ENCODE measurements at regions of chr12 and their contacts with region 1.

Region 1: GRCh38 chr12:54368709-54369583 is 4.7 kb upstream of the GPR84 start:
- DNase-seq: peak; percentile 67 to 87 (median 83)
- ATAC-seq: peak; percentile 89
- H3K4me3 ChIP-seq: peak overlapping the region; percentile 46
- H3K4me3 Mint-ChIP-seq: peak overlapping the region; percentile 26 to 79 (median 68)
- H3K27ac ChIP-seq: no peak overlapping the region
- H3K27ac Mint-ChIP-seq: peak overlapping the region in 7 of 9 donors; percentile 20 to 87 (median 54)
- H3K4me1 ChIP-seq: peaks cover 12 to 24% of the 10 kb centered on the region in 2 donors
- H3K4me1 Mint-ChIP-seq: peaks cover 21 to 49% (median 38%) of the 10 kb centered on the region in 7 donors
- H3K27me3 ChIP-seq: no peaks in the 10 kb centered on the region
- H3K27me3 Mint-ChIP-seq: peaks cover 0 to 9% (median 0%) of the 10 kb centered on the region in 5 donors

Region 2: DNA sequence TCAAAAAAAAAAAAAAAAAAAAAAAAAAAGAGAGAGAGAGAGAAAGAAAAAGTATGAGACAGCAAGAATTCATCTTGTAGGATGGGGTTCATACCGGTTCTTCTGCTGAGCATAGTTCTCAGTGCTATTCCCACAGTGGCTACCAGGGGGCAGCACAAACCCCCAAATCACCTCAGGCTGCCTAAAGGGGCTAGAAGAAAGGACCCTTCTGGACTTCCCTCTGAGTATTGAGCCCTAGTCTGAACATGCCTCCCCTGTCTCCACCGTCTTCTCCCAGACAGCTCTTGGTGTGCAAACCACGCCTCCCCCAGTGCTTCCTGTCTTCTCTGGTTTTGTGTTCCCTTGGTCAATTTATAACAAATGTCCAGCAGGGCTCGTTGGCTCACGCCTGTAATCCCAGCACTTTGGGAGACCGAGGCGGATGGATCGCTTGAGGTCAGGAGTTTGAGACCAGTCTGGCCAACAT is 148.8 kb before region 1 on chr12:
- CTCF ChIA-PET with region 1: interaction called, 10 read pairs
- POLR2A ChIA-PET with region 1: interaction called, 4 read pairs
- intact Hi-C with region 1: loop called (anchors 1 to 2 kb)
- DNase-seq: peak; percentile 37 to 65 (median 58)
- ATAC-seq: peak; percentile 74
- H3K4me3 ChIP-seq: no peak overlapping the region
- H3K4me3 Mint-ChIP-seq: peak overlapping the region in 2 of 10 donors; percentile 12 to 31
- H3K27ac ChIP-seq: no peak overlapping the region
- H3K27ac Mint-ChIP-seq: no peak overlapping the region
- H3K4me1 ChIP-seq: peaks cover 23 to 25% of the 10 kb centered on the region in 2 donors
- H3K4me1 Mint-ChIP-seq: peaks cover 18 to 42% (median 28%) of the 10 kb centered on the region in 7 donors
- H3K27me3 ChIP-seq: no peaks in the 10 kb centered on the region
- H3K27me3 Mint-ChIP-seq: peaks cover 0 to 19% (median 4%) of the 10 kb centered on the region in 5 donors

Region 3: GRCh38 chr12:54294152-54294952 is 74.6 kb before region 1 on chr12:
- CTCF ChIA-PET with region 1: interaction called, 15 read pairs
- POLR2A ChIA-PET with region 1: no interaction called
- intact Hi-C with region 1: loop called (anchors 1 kb)
- DNase-seq: peak in 8 of 9 donors; percentile 22 to 70 (median 44)
- ATAC-seq: peak; percentile 76
- H3K4me3 ChIP-seq: no peak overlapping the region
- H3K4me3 Mint-ChIP-seq: no peak overlapping the region
- H3K27ac ChIP-seq: no peak overlapping the region
- H3K27ac Mint-ChIP-seq: no peak overlapping the region
- H3K4me1 ChIP-seq: no peaks in the 10 kb centered on the region
- H3K4me1 Mint-ChIP-seq: peaks cover 5 to 22% (median 6%) of the 10 kb centered on the region in 7 donors
- H3K27me3 ChIP-seq: no peaks in the 10 kb centered on the region
- H3K27me3 Mint-ChIP-seq: peaks cover 0 to 20% (median 5%) of the 10 kb centered on the region in 5 donors

Region 4: DNA sequence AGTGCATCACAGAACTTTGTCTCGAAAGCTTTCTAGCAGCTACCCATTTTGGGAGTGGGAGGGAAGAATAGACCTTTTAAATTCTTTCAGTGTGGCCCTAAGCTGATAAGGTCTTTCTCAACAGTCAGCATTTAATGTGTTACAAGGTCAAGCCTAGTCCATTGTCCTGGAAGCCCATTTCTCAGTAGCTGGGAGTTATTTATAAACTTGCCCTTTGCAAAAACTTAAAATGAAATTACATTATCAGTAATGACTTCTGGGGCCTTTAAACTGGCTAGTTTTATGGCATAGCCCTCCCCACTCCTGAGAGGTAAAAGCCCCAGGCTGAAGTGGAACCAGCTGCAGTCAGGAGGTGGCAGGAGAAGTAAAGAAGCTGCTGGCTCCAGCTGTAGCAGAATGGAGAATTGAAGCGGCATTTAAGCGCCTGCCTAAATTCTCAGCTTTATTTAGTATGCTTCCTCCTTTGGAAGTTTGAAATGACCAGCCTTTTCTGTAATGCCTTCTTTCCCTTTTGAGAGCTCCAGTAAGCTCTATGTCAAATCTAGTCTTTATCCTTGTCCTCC is 31.6 kb before region 1 on chr12:
- CTCF ChIA-PET with region 1: interaction called, 8 read pairs
- POLR2A ChIA-PET with region 1: no interaction called
- intact Hi-C with region 1: loop called (anchors 1 kb)
- DNase-seq: no peak
- ATAC-seq: no peak
- H3K4me3 ChIP-seq: no peak overlapping the region
- H3K4me3 Mint-ChIP-seq: no peak overlapping the region
- H3K27ac ChIP-seq: no peak overlapping the region
- H3K27ac Mint-ChIP-seq: peak overlapping the region in 2 of 9 donors; percentile 19 to 25
- H3K4me1 ChIP-seq: peaks cover 4 to 13% of the 10 kb centered on the region in 2 donors
- H3K4me1 Mint-ChIP-seq: peaks cover 7 to 66% (median 32%) of the 10 kb centered on the region in 7 donors
- H3K27me3 ChIP-seq: no peaks in the 10 kb centered on the region
- H3K27me3 Mint-ChIP-seq: no peaks in the 10 kb centered on the region

Region 5: GRCh38 chr12:54439521-54440255 is 70.7 kb after region 1 on chr12:
- CTCF ChIA-PET with region 1: interaction called, 5 read pairs
- POLR2A ChIA-PET with region 1: no interaction called
- intact Hi-C with region 1: loop called in 1 of 2 experiments (anchors 1 kb)
- DNase-seq: peak in 7 of 9 donors; percentile 24 to 68 (median 62)
- ATAC-seq: peak; percentile 97
- H3K4me3 ChIP-seq: no peak overlapping the region
- H3K4me3 Mint-ChIP-seq: peak overlapping the region in 2 of 10 donors; percentile 14 to 21
- H3K27ac ChIP-seq: no peak overlapping the region
- H3K27ac Mint-ChIP-seq: peak overlapping the region in 7 of 9 donors; percentile 9 to 78 (median 29)
- H3K4me1 ChIP-seq: peaks cover 0 to 3% of the 10 kb centered on the region in 2 donors
- H3K4me1 Mint-ChIP-seq: peaks cover 4 to 24% (median 6%) of the 10 kb centered on the region in 7 donors
- H3K27me3 ChIP-seq: no peaks in the 10 kb centered on the region
- H3K27me3 Mint-ChIP-seq: peaks cover 0 to 32% (median 0%) of the 10 kb centered on the region in 5 donors

Measured in naive thymus-derived CD4-positive, alpha-beta T cell (primary cell).